AG04450 (cell line): ENCODE measurements at regions of chr7 and their contacts with region 1.

Region 1: DNA sequence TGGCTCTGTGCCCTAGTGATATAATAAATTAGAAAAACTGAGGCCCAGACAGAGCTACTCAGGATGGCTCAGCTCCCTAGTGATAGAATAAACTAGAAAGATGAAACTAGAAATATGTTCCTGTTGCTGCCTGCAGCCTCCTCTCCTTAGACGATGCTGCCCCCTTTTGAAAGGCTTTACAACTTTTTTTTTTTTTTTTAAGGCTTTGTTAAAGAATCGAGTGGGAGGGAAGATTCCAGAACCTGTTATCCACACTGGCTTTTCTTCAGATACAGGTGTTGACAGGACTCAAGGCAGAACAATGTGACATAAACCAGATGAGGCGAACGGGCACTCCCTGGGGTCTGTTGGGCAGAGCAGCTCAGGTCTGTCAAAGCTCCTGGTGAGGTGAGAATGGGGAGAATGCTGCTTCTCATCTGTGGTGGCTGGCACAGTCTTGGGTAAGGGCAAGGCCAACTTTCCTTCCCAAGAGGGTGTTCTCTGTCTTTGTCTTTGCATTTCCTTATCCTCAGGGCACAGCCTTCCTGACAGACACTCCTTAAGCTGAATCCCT is 175.1 kb downstream of the COBL start:
- DNase-seq: peak; percentile 1
- H3K4me3 ChIP-seq: no peak overlapping the region
- H3K27ac ChIP-seq: no peak overlapping the region
- H3K27me3 ChIP-seq: peaks cover 2% of the 10 kb centered on the region
- CTCF ChIP-seq: peak; percentile 74

Region 2: DNA sequence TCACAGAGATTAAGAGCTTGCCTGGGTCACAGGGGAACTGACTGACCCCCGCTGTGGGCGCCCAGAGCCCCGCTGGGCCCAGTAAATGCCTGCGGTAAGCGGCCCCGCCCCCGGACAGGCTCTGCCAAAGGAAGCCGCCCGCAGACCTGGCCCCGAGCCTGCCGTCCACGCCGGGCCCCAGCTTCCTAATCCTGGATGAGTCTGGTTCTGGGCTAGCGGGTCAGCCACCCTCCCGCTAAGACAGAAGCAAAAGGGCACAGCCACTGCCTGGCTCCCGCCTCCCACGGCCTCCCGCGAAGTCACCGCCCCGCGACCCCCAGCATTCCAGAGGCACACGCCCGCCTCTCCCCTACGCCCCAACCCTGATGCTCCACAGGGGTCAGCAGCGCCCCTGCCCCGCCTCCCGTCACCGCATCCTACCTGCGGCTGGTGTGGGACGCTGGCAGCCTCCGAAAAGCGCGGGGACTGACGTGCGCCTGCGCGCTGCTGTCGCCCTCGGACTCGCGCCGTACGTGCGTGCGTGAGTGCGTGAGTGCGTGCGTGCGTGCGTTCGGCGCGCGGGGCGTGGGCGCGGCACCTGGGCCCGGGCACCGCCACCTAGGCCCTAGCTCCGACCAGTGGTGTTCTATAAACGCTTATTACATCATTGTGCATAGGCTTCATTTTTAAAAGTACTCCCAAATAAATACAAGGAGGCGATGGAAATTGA is 691.5 kb before region 1 on chr7 and contains the start of gene FIGNL1:
- CTCF ChIA-PET with region 1: interaction called, 10 read pairs
- POLR2A ChIA-PET with region 1: no interaction called
- DNase-seq: peak; percentile 24
- H3K4me3 ChIP-seq: peak within 1 kb of the TSS; percentile 90
- H3K27ac ChIP-seq: peak within 1 kb of the TSS; percentile 39
- H3K27me3 ChIP-seq: peaks cover 2% of the 10 kb centered on the region
- CTCF ChIP-seq: no peak
- polyA plus RNA-seq, gene FIGNL1: 7.1 and 9.5 TPM in 2 replicates

Region 3: GRCh38 chr7:50534690-50535290 is 606.7 kb before region 1 on chr7:
- CTCF ChIA-PET with region 1: interaction called, 11 read pairs
- POLR2A ChIA-PET with region 1: interaction called, 4 read pairs
- DNase-seq: peak; percentile 98
- H3K4me3 ChIP-seq: 0 out of 2 replicates have a peak overlapping the region, but pooled peaks have one; percentile 20
- H3K27ac ChIP-seq: peak overlapping the region; percentile 81
- H3K27me3 ChIP-seq: peaks cover 5% of the 10 kb centered on the region
- CTCF ChIP-seq: peak; percentile 7; the same call in 1 of the 2 replicates

Region 4: DNA sequence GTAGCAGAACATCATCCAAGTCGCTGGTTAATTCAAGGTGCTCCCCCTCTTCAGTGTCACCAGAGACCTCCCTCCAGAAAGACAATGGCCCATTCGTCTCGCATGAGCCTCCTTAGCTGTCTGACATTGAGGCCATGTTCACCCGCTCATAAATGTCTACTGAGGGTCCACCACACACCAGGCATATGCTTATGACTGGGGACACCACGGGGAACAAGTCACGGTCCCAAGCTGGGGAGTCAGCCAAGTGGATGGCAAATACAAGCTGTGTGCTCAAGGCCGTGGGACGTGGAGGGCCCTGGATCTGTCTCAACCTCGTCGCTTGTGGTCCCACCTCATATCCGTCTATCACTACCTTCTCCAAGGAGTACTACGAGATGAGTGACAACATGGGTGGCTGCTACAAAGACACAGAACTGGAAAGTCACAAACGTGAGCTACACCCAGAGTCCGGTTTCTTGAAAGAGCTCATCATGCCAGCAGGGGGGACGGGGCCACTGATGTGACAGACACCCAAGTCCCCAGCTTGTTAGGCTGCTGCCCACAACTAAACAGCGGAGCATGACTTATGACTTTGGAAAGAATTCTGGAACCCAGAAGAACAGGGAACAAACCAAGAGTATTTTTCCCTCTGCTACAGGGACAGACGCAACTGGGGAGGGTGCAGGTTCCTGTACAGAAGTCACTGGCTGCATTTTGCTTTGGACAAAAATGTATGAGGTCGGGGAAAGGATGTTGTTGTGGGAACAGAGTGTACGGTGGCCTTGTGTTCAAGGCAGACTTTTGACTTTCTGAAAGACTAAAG is 14.5 kb before region 1 on chr7:
- CTCF ChIA-PET with region 1: interaction called, 15 read pairs
- POLR2A ChIA-PET with region 1: no interaction called
- DNase-seq: no peak
- H3K4me3 ChIP-seq: no peak overlapping the region
- H3K27ac ChIP-seq: no peak overlapping the region
- H3K27me3 ChIP-seq: peaks cover 3% of the 10 kb centered on the region
- CTCF ChIP-seq: no peak

Region 5: GRCh38 chr7:51154201-51154600 is 12.7 kb after region 1 on chr7:
- CTCF ChIA-PET with region 1: interaction called, 21 read pairs
- POLR2A ChIA-PET with region 1: no interaction called
- DNase-seq: no peak
- H3K4me3 ChIP-seq: no peak overlapping the region
- H3K27ac ChIP-seq: no peak overlapping the region
- H3K27me3 ChIP-seq: peaks cover 13% of the 10 kb centered on the region
- CTCF ChIP-seq: no peak